PC-9 (cell line): ENCODE measurements at regions of chr5 and their contacts with region 1.

Region 1: GRCh38 chr5:73701518-73701917 is 75.5 kb downstream of the ARHGEF28 start:
- DNase-seq: peak; percentile 43 to 98
- H3K4me3 ChIP-seq: peak overlapping the region; percentile 15; the same call in 1 of the 2 replicates
- H3K27ac ChIP-seq: peak overlapping the region; percentile 70
- H3K4me1 ChIP-seq: peaks cover 37% of the 10 kb centered on the region
- H3K27me3 ChIP-seq: no peaks in the 10 kb centered on the region
- CTCF ChIP-seq: no peak

Region 2: GRCh38 chr5:73638344-73639095 is 63.0 kb before region 1 on chr5:
- CTCF ChIA-PET with region 1: no interaction called
- POLR2A ChIA-PET with region 1: interaction called, 3 read pairs
- intact Hi-C with region 1: loop called (anchors 5 kb)
- DNase-seq: peak in 1 of 2 experiments; percentile 95
- H3K4me3 ChIP-seq: peak overlapping the region; percentile 15; the same call in 1 of the 2 replicates
- H3K27ac ChIP-seq: peak overlapping the region; percentile 90
- H3K4me1 ChIP-seq: peaks cover 77% of the 10 kb centered on the region
- H3K27me3 ChIP-seq: no peaks in the 10 kb centered on the region
- CTCF ChIP-seq: no peak

Region 3: DNA sequence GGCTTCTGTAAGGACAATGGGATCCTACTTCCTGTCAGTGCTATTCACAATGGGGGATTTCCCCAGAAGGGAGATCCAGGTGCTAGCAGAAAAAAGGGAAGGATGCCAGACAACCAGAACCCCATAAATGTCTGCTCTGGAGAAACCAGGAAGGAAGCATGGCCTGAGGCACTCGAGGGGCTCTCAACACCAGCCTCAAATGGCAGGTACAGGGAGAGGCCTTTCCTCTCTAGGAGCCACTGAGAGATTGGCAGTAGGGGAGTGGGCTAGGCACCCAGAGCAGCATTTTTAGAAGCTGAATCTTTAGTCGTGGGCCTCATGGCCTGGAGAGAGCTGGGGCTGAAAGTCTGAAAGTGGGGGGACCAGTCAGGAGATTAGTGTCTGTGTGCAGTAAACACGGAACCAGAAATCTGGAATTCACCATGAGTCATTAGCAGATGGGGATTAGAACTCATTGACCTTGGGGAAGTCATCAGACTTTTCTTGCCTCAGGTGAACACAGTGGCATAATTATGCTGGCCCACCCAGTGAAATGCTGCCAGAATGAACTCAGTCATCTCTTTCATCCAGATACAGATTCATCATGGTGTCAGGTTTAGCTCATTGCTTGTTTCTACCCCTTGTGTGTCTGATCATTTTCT is 47.2 kb before region 1 on chr5:
- CTCF ChIA-PET with region 1: no interaction called
- POLR2A ChIA-PET with region 1: no interaction called
- intact Hi-C with region 1: loop called (anchors 2 kb)
- DNase-seq: peak; percentile 61 to 96
- H3K4me3 ChIP-seq: no peak overlapping the region
- H3K27ac ChIP-seq: peak overlapping the region; percentile 96
- H3K4me1 ChIP-seq: peaks cover 65% of the 10 kb centered on the region
- H3K27me3 ChIP-seq: no peaks in the 10 kb centered on the region
- CTCF ChIP-seq: no peak

Region 4: GRCh38 chr5:73740274-73740790 is 38.8 kb after region 1 on chr5:
- CTCF ChIA-PET with region 1: no interaction called
- POLR2A ChIA-PET with region 1: interaction called, 11 read pairs
- intact Hi-C with region 1: no loop called
- DNase-seq: no peak
- H3K4me3 ChIP-seq: no peak overlapping the region
- H3K27ac ChIP-seq: no peak overlapping the region
- H3K4me1 ChIP-seq: no peaks in the 10 kb centered on the region
- H3K27me3 ChIP-seq: no peaks in the 10 kb centered on the region
- CTCF ChIP-seq: no peak

Region 5: DNA sequence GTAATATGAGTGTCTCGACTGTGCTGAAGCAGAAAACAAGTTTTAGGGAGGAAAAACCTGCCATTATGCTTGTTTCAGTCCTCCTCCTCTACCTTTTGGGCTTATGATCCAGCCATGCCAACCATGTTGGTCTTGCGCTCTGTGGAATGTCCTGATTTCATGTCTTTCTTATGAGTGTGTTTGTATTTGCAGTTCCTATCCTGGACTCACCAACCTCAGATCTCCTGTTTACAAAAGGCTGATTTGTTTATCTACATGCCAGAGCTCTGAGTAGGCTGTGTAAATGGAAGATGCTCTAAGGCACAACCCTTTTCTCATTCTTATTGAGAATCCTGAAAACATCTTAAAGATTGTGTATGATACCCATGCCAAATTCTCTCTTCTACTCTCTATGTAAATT is 63.1 kb after region 1 on chr5:
- CTCF ChIA-PET with region 1: no interaction called
- POLR2A ChIA-PET with region 1: interaction called, 3 read pairs
- intact Hi-C with region 1: loop called (anchors 5 kb)
- DNase-seq: peak; percentile 42 to 86
- H3K4me3 ChIP-seq: no peak overlapping the region
- H3K27ac ChIP-seq: peak overlapping the region; percentile 68
- H3K4me1 ChIP-seq: peaks cover 23% of the 10 kb centered on the region
- H3K27me3 ChIP-seq: no peaks in the 10 kb centered on the region
- CTCF ChIP-seq: no peak

Region 6: GRCh38 chr5:73851471-73852181 is 150.1 kb after region 1 on chr5:
- CTCF ChIA-PET with region 1: no interaction called
- POLR2A ChIA-PET with region 1: no interaction called
- intact Hi-C with region 1: no loop called
- DNase-seq: no peak
- H3K4me3 ChIP-seq: no peak overlapping the region
- H3K27ac ChIP-seq: no peak overlapping the region
- H3K4me1 ChIP-seq: peaks cover 13% of the 10 kb centered on the region
- H3K27me3 ChIP-seq: no peaks in the 10 kb centered on the region
- CTCF ChIP-seq: no peak